ENCODE measurements at regions of chr4 and their contacts with region 1.

Region 1: GRCh38 chr4:132596186-132596585 is 552.9 kb upstream of the PCDH10 start:
- DNase-seq: no peak

Region 2: GRCh38 chr4:132513491-132513890 is 82.7 kb before region 1 on chr4:
- intact Hi-C with region 1: loop called in 1 of 2 experiments (anchors 5 kb)
- DNase-seq: no peak

Region 3: DNA sequence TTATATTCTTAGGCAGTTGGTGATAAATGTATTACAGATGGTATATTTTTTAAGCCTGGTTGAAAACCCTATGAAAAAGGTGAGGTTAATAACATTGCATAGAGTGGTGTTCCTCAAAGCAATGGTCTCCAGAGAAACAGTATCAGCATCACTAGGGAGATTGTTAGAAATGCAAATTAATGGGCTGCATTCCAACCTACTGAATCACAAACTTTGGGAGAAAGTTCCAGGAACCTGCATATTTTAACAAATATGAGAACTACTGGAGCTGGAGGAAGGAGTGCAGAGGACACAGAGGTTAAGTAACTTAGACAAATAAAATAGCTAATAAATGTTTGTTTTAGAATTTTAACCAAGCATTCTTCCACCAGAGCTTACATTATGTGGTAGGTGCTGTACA is 386.0 kb after region 1 on chr4:
- intact Hi-C with region 1: no loop called
- DNase-seq: no peak